CD4-positive, alpha-beta T cell (primary cell): ENCODE measurements at regions of chr10 and their contacts with region 1.

Region 1: GRCh38 chr10:36574207-36574606 is 551.2 kb upstream of the ANKRD30A start:
- DNase-seq: no peak
- ATAC-seq: no peak
- H3K4me3 ChIP-seq: no peak overlapping the region
- H3K4me3 Mint-ChIP-seq: no peak overlapping the region
- H3K27ac ChIP-seq: no peak overlapping the region
- H3K27ac Mint-ChIP-seq: no peak overlapping the region
- H3K4me1 ChIP-seq: no peaks in the 10 kb centered on the region
- H3K4me1 Mint-ChIP-seq: no peaks in the 10 kb centered on the region
- H3K27me3 ChIP-seq: no peaks in the 10 kb centered on the region
- H3K27me3 Mint-ChIP-seq: no peaks in the 10 kb centered on the region
- CTCF ChIP-seq: no peak

Region 2: DNA sequence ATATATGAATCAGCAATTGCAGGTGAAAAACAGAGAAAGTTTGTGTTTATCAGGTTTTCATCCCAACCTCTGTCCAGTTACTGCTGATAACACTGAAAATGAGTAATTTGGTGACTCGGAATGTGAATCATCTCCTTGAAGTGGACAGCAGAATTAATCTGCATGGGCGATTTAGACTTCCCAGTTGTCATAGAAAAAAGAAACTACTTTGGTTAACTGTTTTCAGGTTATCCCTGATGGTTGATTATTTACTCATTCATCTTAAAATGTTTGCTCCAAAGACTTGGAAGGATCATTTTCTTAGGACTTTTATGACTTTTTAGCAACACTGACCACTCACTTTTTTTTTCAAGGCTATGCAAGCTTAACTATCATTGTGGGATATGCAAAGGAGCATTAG is 47.1 kb after region 1 on chr10:
- CTCF ChIA-PET with region 1: no interaction called
- POLR2A ChIA-PET with region 1: no interaction called
- intact Hi-C with region 1: loop called in 1 of 2 experiments (anchors 5 kb)
- DNase-seq: no peak
- ATAC-seq: no peak
- H3K4me3 ChIP-seq: no peak overlapping the region
- H3K4me3 Mint-ChIP-seq: no peak overlapping the region
- H3K27ac ChIP-seq: no peak overlapping the region
- H3K27ac Mint-ChIP-seq: no peak overlapping the region
- H3K4me1 ChIP-seq: no peaks in the 10 kb centered on the region
- H3K4me1 Mint-ChIP-seq: no peaks in the 10 kb centered on the region
- H3K27me3 ChIP-seq: no peaks in the 10 kb centered on the region
- H3K27me3 Mint-ChIP-seq: no peaks in the 10 kb centered on the region
- CTCF ChIP-seq: peak; percentile 1